Calu3 (cell line): ENCODE measurements at regions of chr11 and their contacts with region 1.

Region 1: GRCh38 chr11:18731949-18732821 is 6.2 kb upstream of the IGSF22 start:
- DNase-seq: peak; percentile 68
- H3K4me3 Mint-ChIP-seq: no peak overlapping the region
- H3K27ac Mint-ChIP-seq: no peak overlapping the region
- H3K4me1 Mint-ChIP-seq: no peaks in the 10 kb centered on the region
- H3K27me3 Mint-ChIP-seq: peaks cover 24% of the 10 kb centered on the region
- CTCF ChIP-seq: peak; percentile 90

Region 2: DNA sequence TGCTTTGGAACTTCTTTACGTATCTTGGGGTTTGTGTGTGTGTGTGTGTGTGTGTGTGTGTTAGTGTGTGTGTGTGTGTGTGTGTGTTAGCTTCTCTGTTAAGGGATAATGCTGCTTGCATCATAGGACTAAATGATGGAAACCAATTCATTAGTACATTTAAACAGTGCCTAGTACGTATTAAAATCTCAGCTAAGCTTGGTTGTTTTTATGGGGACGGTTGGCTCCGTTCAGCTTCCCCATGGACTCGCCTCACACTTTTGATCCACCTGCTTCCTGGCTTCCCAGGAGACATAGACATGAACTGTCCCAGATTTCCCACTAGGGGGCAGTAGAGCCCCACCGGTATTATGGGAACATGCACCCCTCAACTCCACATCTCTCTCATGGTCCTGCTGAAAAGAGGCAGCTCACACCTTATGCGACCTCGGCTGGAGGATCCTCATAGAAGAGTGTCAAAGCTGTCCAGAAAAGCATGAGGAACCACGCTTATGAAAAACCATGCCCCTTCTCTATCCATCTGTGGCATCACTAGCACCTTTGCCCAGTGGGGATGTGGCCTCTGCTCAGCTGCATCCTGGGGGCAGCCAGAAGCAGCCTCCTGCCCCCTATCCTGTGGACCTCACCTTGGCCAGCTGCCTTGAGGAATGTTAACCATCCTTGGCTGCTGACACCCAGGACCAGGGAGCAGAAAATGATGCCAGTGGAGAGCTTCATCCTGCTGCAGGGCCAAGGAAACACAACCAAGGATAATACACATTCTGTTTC is 616.6 kb before region 1 on chr11:
- CTCF ChIA-PET with region 1: no interaction called
- intact Hi-C with region 1: loop called (anchors 10 kb)
- DNase-seq: peak; percentile 78
- H3K4me3 Mint-ChIP-seq: no peak overlapping the region
- H3K27ac Mint-ChIP-seq: no peak overlapping the region
- H3K4me1 Mint-ChIP-seq: peaks cover 16% of the 10 kb centered on the region
- H3K27me3 Mint-ChIP-seq: peaks cover 35% of the 10 kb centered on the region
- CTCF ChIP-seq: peak; percentile 80

Region 3: DNA sequence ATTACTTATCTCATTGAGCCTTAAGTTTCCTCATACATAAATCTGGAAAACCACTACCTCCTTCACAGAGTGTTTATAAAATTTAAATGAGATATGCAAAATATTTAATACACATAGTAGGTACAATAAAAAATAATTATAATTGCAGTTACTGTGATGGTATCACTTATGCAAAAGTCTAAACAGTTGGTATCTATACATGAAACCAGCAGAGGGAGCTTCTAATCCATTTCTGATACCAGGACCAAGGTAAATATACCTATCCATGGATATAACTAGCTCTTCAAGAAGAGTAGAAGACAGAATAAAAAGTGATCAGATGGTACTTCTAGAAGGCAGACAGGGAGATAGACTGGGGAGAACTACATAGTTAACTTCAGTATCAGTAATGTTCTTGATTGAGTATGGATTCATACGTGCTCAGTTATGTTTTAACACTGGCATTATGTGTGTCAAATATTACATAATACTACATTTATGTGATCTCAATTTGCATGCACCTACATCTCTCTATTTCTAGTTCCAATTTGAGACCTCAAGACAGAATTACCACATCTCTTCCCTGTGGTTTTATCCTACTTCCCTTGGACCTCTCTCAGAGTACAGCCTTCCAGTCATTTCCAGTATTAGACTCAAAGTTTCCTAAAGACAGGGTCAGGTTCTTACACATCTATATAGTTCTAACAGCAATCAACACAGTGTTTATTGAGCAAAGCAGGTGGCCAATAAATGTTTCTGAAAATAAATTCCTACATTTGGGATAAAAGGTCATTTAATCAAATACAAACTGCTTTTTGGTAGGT is 191.8 kb before region 1 on chr11:
- CTCF ChIA-PET with region 1: interaction called, 3 read pairs
- intact Hi-C with region 1: loop called (anchors 1 kb)
- DNase-seq: no peak
- H3K4me3 Mint-ChIP-seq: no peak overlapping the region
- H3K27ac Mint-ChIP-seq: no peak overlapping the region
- H3K4me1 Mint-ChIP-seq: no peaks in the 10 kb centered on the region
- H3K27me3 Mint-ChIP-seq: no peaks in the 10 kb centered on the region
- CTCF ChIP-seq: no peak

Region 4: DNA sequence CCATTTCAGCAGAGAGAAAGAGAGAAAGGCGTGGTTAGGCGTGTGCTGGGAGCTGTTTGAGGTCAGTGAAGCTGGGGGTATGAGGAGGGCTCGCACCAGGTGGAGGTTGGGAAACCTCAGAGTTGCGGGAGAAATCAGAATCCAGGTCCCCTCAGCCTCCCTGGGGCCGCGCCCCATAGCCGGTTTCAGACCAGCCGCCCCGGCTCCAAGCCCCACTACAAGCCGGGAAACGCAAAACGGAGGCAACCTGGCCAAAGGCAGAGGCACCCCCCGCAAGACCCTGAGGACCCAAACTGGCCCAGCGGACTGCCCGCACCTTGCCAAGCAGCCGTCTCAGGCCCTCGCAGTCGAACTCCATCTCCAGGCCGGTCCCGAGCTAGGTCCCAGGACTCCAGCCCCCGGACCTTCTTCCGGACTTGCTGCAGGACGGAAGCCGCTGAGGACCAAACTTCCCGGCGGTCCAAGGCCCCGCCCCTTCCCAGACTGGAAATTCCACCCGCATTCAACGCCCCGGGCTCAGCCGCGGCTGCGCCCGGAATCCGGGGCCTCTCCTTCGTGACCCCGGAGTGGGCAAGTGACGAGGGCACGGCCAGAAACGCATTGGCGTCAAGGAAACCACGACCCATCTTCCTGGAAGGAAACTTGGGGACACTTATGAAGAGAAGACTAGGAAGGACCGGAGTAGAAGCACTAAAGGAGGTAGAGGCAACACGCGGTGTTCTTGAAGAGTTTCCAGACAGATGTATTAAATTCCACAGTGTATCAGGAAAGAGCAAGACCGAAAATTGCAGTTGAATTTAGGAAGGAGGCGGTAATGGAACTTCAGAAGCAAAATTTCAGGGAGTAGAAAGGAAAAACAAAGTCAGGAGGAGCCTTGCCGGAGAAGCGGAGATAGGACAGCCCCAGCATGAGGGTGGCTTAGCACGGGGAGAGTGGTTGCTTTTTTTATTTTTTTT is 143.6 kb before region 1 on chr11 and contains the start of gene UEVLD:
- CTCF ChIA-PET with region 1: no interaction called
- intact Hi-C with region 1: loop called (anchors 5 kb)
- DNase-seq: peak; percentile 91
- H3K4me3 Mint-ChIP-seq: no peak within 1 kb of the TSS
- H3K27ac Mint-ChIP-seq: no peak within 1 kb of the TSS
- H3K4me1 Mint-ChIP-seq: no peaks in the 10 kb centered on the region
- H3K27me3 Mint-ChIP-seq: no peaks in the 10 kb centered on the region
- CTCF ChIP-seq: no peak
- total RNA-seq, gene UEVLD: 23.1 and 25.9 TPM in 2 replicates

Region 5: DNA sequence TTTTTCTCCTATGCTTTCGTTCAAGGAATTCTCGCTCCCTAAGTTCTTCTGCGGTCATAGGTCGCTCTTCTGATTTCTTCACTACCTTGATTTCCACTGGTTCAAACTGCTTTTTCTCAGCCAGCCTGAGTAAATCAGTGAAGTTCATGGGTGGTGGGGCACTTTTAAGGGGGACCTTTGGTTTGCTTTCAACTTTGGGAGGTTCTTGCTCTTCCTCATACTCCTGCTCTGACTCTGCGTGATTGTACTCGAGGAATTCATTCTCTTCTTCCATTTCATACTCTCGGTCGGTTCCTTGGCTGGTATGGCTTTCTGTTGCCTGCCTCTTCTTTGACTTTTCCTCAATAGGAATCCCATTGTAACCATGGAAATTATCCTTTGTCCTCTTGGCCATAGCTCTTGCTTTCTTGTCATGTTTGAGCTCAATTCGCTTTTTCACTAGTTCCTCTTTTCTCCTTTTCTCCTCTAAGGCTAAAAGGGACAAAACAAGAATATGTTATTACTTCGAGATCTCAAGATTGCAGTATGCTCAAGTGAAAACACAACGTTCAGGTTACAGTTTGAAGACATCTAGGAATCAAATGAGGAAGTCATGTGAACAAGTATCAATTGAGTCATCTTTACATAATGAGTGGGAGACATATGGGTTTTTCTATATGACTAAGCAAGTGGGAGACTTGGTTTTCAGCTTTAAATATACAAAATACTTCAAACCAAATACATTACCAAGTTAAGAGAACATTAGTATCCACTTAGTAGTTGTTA is 116.4 kb before region 1 on chr11:
- CTCF ChIA-PET with region 1: no interaction called
- intact Hi-C with region 1: no loop called
- DNase-seq: no peak
- H3K4me3 Mint-ChIP-seq: no peak overlapping the region
- H3K27ac Mint-ChIP-seq: no peak overlapping the region
- H3K4me1 Mint-ChIP-seq: no peaks in the 10 kb centered on the region
- H3K27me3 Mint-ChIP-seq: no peaks in the 10 kb centered on the region
- CTCF ChIP-seq: no peak

Region 6: GRCh38 chr11:18669220-18669598 is 63.0 kb before region 1 on chr11:
- CTCF ChIA-PET with region 1: interaction called, 3 read pairs
- intact Hi-C with region 1: loop called (anchors 5 kb)
- DNase-seq: peak; percentile 86
- H3K4me3 Mint-ChIP-seq: peak overlapping the region; percentile 32
- H3K27ac Mint-ChIP-seq: peak overlapping the region; percentile 81
- H3K4me1 Mint-ChIP-seq: peaks cover 51% of the 10 kb centered on the region
- H3K27me3 Mint-ChIP-seq: no peaks in the 10 kb centered on the region
- CTCF ChIP-seq: no peak